ENCODE measurements at regions of chr21 and their contacts with region 1.

Region 1: DNA sequence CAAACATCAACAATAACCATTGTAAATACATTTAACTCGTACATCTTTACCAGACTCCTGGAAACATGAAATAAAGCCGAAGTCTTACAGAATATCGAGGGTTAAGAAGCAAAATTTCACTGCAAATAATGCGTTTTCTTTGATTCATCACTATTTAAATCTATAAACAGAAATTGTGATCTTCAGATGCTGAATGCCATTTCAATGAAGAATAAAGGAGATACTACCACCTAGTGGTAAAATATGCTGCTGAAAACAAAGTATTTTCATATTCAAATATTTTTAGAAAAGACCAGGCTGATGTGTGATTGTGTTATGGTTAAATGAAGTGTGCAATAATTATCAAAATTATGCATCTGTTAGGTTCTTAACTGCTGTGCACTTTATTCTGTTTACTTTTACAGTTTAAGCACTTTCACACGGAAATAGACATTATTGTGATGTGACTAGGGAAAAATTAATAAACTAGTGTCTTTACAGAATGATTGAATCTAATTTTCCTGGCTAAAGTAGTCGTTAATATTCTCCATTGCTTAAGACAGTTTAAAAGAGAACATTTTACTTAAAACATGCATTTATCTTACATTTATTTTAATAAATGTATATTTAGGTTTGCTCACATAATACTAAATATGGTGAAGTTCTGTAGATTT is 1093.1 kb downstream of the MRPL39 start:
- DNase-seq: no peak
- H3K4me3 ChIP-seq: no peak overlapping the region
- H3K4me3 Mint-ChIP-seq: no peak overlapping the region
- H3K27ac Mint-ChIP-seq: no peak overlapping the region
- H3K4me1 ChIP-seq: no peaks in the 10 kb centered on the region
- H3K4me1 Mint-ChIP-seq: no peaks in the 10 kb centered on the region
- H3K27me3 ChIP-seq: no peaks in the 10 kb centered on the region
- H3K27me3 Mint-ChIP-seq: no peaks in the 10 kb centered on the region
- CTCF ChIP-seq: peak; percentile 26 to 34

Region 2: GRCh38 chr21:23936224-23936623 is 578.0 kb before region 1 on chr21:
- CTCF ChIA-PET with region 1: no interaction called
- POLR2A ChIA-PET with region 1: no interaction called
- intact Hi-C with region 1: loop called (anchors 5 kb)
- DNase-seq: peak in 1 of 2 experiments; percentile 26
- H3K4me3 ChIP-seq: no peak overlapping the region
- H3K4me3 Mint-ChIP-seq: no peak overlapping the region
- H3K27ac Mint-ChIP-seq: no peak overlapping the region
- H3K4me1 ChIP-seq: no peaks in the 10 kb centered on the region
- H3K4me1 Mint-ChIP-seq: no peaks in the 10 kb centered on the region
- H3K27me3 ChIP-seq: no peaks in the 10 kb centered on the region
- H3K27me3 Mint-ChIP-seq: peaks cover 3% of the 10 kb centered on the region
- CTCF ChIP-seq: peak; percentile 25 to 27

Region 3: GRCh38 chr21:24681456-24681855 is 167.2 kb after region 1 on chr21:
- CTCF ChIA-PET with region 1: no interaction called
- POLR2A ChIA-PET with region 1: no interaction called
- intact Hi-C with region 1: no loop called
- DNase-seq: no peak
- H3K4me3 ChIP-seq: no peak overlapping the region
- H3K4me3 Mint-ChIP-seq: no peak overlapping the region
- H3K27ac Mint-ChIP-seq: no peak overlapping the region
- H3K4me1 ChIP-seq: no peaks in the 10 kb centered on the region
- H3K4me1 Mint-ChIP-seq: no peaks in the 10 kb centered on the region
- H3K27me3 ChIP-seq: no peaks in the 10 kb centered on the region
- H3K27me3 Mint-ChIP-seq: peaks cover 4% of the 10 kb centered on the region
- CTCF ChIP-seq: no peak

Measured in Caco-2 (cell line).